ENCODE measurements at regions of chr20 and their contacts with region 1.

Region 1: DNA sequence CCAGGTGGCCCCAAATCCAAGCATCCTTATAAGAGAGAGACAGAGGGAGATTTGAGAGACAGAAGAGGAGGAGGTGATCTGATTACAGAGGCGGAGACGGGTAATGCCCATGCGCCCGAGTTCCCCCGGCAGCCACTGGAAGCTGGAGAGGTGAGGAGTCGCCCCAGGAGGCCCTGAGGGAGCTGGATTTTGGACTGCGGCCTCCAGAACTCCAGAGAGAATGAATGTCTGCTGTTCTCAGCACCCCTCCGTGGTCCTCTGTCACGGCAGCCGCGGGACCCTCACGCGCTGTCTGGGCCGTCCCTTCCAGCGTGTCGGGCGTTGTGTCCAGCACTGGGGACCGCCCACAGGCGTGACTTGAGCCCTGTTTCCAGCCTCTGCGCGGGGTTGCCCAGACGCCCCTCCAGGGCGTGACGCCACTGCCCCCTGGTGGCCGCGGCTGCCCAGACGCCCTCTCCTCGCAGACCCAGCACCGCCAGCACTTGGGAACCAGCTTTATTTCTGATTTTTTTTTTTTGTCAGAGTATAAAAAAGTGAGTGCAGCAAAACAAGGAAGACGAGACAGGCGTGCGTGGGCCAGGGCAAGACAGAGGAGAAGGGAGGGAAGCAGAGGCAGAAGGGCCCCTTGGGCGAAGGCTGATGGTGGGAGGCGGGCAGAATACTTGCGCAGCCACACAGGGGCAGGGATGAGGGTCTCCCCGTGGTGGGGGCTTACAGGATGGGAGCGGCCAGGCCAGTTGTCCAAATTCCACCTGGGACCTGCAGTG is 4.1 kb upstream of the ZNF512B start:
- DNase-seq: peak; percentile 93

Region 2: GRCh38 chr20:63782051-63782471 is 191.8 kb before region 1 on chr20:
- intact Hi-C with region 1: loop called (anchors 10 kb)
- DNase-seq: no peak

Region 3: DNA sequence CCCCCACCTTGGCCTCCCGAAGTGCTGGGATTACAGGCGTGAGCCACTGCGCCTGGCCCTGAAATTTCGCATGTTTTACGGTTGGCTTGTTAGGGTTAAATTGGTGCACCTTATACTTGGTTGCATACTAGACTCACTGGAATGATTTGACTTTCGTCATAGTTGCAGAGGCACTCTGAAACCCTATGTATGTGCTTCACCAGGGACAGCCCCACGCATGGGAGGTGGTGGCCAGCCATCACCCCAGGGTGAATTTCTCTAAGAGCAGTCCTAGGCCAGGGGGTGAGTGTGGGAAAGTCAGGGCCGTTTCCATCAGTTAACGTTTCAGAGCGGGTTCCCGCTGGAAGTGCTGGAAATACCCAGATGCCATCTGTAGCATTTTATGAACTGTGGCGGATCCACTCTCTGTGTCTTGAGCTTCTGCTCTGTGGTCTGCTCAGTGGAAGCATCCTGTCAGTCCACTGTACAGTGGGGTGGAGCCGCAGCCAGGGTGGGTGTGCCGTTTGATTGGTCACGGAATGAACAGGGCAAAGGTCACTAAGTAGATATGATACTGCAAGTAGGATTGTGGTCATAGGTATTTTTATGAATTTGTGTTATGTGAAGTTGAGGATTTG is 65.7 kb before region 1 on chr20:
- intact Hi-C with region 1: loop called (anchors 2 kb)
- DNase-seq: no peak

Measured in cardiac septum (tissue), 1 donor.